Right cardiac atrium (tissue), 5 donors: ENCODE measurements at regions of chr17 and their contacts with region 1.

Region 1: DNA sequence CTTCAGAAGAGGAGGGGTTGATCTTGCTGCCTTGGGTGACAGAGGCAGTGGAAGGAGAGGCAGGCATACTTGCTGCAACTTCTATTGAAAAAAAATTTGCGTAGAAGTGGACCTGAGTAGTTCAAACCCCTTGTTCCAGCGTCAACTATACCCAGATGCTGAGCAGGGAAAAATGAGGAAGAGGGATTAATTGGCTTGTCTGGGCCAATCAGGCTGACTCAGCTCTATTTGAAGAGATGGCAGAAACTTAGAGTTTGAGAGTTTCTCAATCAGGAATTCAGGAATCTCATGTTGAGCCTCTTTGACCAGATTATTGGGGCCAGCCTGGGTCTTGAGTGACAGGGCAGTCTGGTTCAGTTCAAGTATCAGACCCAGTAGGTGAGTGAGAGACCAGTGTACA is 17.6 kb downstream of the CASC3 start:
- DNase-seq: no peak
- ATAC-seq: no peak
- H3K4me3 ChIP-seq: no peak overlapping the region
- H3K27ac ChIP-seq: no peak overlapping the region
- H3K4me1 ChIP-seq: peaks cover 5% of the 10 kb centered on the region
- H3K27me3 ChIP-seq: no peaks in the 10 kb centered on the region

Region 2: GRCh38 chr17:40026816-40027613 is 131.0 kb before region 1 on chr17:
- intact Hi-C with region 1: loop called in 1 of 4 experiments (anchors 10 kb)
- DNase-seq: peak; percentile 86 to 90 (median 90)
- ATAC-seq: peak; percentile 87 to 90
- H3K4me3 ChIP-seq: no peak overlapping the region
- H3K27ac ChIP-seq: no peak overlapping the region
- H3K4me1 ChIP-seq: no peaks in the 10 kb centered on the region
- H3K27me3 ChIP-seq: no peaks in the 10 kb centered on the region